WTC11 (cell line): ENCODE measurements at regions of chr1 and their contacts with region 1.

Region 1: DNA sequence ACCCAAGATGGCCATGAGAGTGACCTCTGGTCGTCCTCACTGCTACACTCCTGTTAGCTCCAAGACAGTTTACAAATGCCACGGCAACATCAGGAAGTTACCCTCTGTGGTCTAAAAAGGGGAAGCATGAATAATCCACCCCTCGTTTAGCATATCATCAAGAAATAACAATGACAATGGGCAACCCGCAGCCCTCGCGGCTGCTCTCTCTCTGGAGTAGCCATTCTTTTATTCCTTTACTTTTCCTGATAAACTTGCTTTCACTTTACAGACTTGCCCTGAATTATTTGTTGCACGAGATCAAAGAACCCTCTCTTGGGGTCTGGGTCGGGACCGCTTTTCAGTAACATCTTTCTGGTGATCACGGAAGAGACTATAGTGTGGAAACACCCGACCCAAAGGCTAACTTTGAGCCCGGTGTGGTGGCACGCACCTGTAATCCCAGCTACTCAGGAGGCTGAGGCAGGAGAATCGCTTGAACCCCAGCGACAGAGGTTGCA is 19.8 kb upstream of the COX20 start:
- DNase-seq: peak; percentile 58
- ATAC-seq: peak; percentile 54
- H3K4me3 Mint-ChIP-seq: peak overlapping the region; percentile 87
- H3K27ac Mint-ChIP-seq: peak overlapping the region; percentile 94
- H3K4me1 Mint-ChIP-seq: peaks cover 45% of the 10 kb centered on the region
- H3K27me3 Mint-ChIP-seq: no peaks in the 10 kb centered on the region
- CTCF ChIP-seq: no peak

Region 2: DNA sequence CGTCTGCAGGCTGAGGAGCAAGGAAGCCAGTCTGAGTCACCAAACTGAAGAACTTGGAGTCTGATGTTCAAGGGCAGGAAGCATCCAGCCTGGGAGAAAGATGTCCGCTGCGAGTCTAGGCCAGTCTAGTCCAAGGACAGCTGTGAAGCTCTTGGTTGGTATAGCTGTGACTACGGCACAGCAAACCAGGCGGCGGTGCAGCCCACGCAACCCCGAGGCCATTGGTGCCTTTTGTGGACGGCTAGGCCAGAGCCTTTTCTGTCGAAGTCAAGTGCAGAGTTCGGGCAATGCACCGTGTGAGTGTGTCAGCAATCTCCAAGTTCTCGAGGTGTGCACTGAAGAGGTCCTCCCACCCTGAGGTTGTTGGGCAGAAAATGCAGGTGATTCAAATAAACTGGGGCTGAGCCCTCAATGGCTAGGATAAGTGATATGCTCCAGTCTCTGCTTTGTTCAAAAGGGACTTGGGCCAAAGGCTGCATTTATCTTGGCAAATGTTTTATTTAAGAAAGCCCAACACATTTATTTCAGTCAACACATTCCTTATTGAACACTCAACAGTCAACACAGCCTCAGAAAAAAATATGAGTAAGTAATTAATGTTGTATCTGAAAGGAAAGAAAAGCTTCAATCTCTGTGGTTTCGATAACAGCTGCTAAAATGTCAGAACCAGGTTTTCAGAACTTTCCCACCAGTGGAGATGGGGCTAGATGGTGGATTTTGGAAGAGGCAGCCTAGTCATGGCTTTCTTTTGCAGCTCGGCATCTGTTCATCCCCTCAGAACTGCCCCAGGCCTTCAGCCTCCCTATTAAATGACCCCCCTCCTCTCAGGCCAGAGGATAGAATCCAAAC is 58.3 kb before region 1 on chr1:
- CTCF ChIA-PET with region 1: no interaction called
- POLR2A ChIA-PET with region 1: no interaction called
- DNase-seq: no peak
- ATAC-seq: no peak
- H3K4me3 Mint-ChIP-seq: no peak overlapping the region
- H3K27ac Mint-ChIP-seq: no peak overlapping the region
- H3K4me1 Mint-ChIP-seq: peaks cover 29% of the 10 kb centered on the region
- H3K27me3 Mint-ChIP-seq: no peaks in the 10 kb centered on the region
- CTCF ChIP-seq: no peak

Region 3: GRCh38 chr1:244801246-244801645 is 14.4 kb before region 1 on chr1:
- CTCF ChIA-PET with region 1: interaction called, 10 read pairs
- POLR2A ChIA-PET with region 1: no interaction called
- DNase-seq: peak; percentile 43
- ATAC-seq: peak; percentile 65
- H3K4me3 Mint-ChIP-seq: no peak overlapping the region
- H3K27ac Mint-ChIP-seq: no peak overlapping the region
- H3K4me1 Mint-ChIP-seq: peaks cover 13% of the 10 kb centered on the region
- H3K27me3 Mint-ChIP-seq: no peaks in the 10 kb centered on the region
- CTCF ChIP-seq: peak; percentile 62; the same call in 1 of the 2 replicates

Region 4: DNA sequence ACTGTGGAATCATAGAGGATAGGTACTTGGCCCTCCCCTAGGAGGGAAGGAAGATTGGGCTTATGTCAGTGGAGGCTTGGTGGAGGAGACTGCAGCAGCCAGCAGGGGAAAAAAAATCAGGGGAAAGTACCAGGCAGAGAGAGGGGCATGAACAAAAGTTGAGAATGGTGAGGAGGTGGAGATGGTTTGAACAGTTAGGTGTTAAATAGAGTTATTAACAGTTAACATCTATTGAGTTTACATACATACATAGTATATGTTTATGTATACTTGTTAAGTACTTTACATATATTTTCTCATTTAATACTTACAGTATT is 185.2 kb after region 1 on chr1:
- CTCF ChIA-PET with region 1: no interaction called
- POLR2A ChIA-PET with region 1: no interaction called
- DNase-seq: no peak
- ATAC-seq: no peak
- H3K4me3 Mint-ChIP-seq: no peak overlapping the region
- H3K27ac Mint-ChIP-seq: no peak overlapping the region
- H3K4me1 Mint-ChIP-seq: peaks cover under 1% of the 10 kb centered on the region
- H3K27me3 Mint-ChIP-seq: no peaks in the 10 kb centered on the region
- CTCF ChIP-seq: no peak